ENCODE measurements at regions of chr11 and their contacts with region 1.

Region 1: GRCh38 chr11:95337175-95337957 is 106.4 kb upstream of the SESN3 start:
- DNase-seq: peak; percentile 78

Region 2: GRCh38 chr11:95266751-95267374 is 70.5 kb before region 1 on chr11:
- intact Hi-C with region 1: no loop called
- DNase-seq: no peak

Region 3: DNA sequence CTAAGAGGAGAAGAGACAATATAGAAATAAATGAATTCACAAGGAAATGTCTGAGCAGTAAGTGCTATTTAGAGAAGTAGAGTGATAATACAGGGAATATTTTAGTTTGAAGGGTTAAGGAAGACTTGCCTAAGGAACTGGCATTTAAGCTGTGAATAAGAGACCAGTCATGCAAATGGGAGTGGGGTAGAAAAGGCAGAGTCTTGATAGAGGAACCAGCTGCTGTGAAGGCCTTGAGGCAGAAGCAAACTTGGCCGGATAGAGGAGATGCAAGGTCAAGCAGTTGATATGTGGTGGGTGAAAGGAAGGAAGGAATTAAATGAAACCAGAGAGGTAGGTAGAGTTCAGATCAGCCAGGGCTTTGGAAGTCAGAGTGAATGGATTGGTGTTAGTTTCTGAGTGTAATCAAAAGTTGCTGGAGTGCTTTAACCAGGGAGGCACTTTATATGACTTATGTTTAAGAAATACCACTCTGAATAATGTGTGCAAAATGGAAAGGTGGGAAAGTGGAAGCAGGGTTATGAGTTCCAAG is 92.1 kb after region 1 on chr11:
- intact Hi-C with region 1: no loop called
- DNase-seq: no peak

Region 4: GRCh38 chr11:95485115-95485900 is 147.9 kb after region 1 on chr11:
- intact Hi-C with region 1: no loop called
- DNase-seq: no peak

Region 5: GRCh38 chr11:95705485-95706124 is 368.2 kb after region 1 on chr11:
- intact Hi-C with region 1: loop called (anchors 5 kb)
- DNase-seq: peak; percentile 90